Pancreas (tissue), 10 donors: ENCODE measurements at regions of chr2 and their contacts with region 1.

Region 1: GRCh38 chr2:25131567-25132298 is 36.6 kb downstream of the POMC start:
- DNase-seq: peak in 2 of 6 donors; percentile 32 to 66
- ATAC-seq: peak; percentile 27 to 38 (median 32)
- H3K4me3 ChIP-seq: peak overlapping the region in 2 of 4 donors; percentile 17 to 31
- H3K27ac ChIP-seq: no peak overlapping the region
- H3K4me1 ChIP-seq: no peaks in the 10 kb centered on the region
- H3K27me3 ChIP-seq: no peaks in the 10 kb centered on the region
- CTCF ChIP-seq: no peak

Region 2: DNA sequence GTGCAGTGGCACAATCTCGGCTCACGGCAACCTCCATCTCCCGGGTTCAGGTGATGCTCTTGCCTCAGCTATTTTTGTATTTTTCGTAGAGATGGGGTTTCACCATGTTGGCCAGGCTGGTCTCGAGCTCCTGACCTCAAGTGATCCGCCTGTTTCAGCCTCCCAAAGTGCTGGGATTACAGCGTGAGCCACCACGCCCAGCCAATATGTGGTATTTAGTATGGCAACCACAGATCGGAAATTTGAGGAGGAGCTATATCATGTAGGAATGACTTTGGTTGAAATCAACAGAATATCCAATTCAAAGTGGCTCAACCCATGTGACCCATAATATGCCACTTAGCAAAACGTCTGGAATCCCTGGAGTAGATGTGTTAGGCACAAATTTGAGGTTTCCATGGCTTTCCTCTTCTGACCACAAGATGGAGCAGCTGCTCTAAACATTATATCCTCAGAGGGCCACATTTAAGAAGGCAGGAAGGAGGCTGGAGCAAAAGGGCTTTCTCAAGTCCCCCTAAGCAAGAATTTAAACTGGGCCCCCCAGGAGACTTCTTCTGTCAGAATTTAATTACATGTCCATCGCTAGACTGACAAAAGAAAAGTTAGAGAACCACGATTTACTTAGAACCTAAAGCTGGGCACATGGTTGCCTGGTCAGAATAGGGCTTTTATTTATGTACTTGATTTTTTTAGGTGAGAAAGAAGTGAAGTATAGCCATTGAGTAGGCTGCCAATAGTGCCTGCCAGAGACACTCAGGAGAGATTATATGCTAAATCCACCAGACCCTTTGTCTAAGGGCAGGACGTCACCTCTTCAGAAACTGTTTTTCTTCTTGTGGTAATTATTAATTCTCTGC is 721.8 kb before region 1 on chr2:
- intact Hi-C with region 1: loop called in 1 of 3 experiments (anchors 10 kb)
- DNase-seq: peak in 2 of 6 donors; percentile 15 to 52
- ATAC-seq: peak; percentile 67 to 94 (median 92)
- H3K4me3 ChIP-seq: no peak overlapping the region
- H3K27ac ChIP-seq: no peak overlapping the region
- H3K4me1 ChIP-seq: no peaks in the 10 kb centered on the region
- H3K27me3 ChIP-seq: no peaks in the 10 kb centered on the region
- CTCF ChIP-seq: peak; percentile 45 to 80 (median 68)

Region 3: GRCh38 chr2:24827321-24828237 is 304.2 kb before region 1 on chr2:
- intact Hi-C with region 1: loop called in 1 of 3 experiments (anchors 10 kb)
- DNase-seq: peak in 5 of 6 donors; percentile 70 to 84 (median 77)
- ATAC-seq: peak; percentile 87 to 96 (median 94)
- H3K4me3 ChIP-seq: no peak overlapping the region
- H3K27ac ChIP-seq: no peak overlapping the region
- H3K4me1 ChIP-seq: no peaks in the 10 kb centered on the region
- H3K27me3 ChIP-seq: no peaks in the 10 kb centered on the region
- CTCF ChIP-seq: peak; percentile 74 to 86 (median 80)

Region 4: DNA sequence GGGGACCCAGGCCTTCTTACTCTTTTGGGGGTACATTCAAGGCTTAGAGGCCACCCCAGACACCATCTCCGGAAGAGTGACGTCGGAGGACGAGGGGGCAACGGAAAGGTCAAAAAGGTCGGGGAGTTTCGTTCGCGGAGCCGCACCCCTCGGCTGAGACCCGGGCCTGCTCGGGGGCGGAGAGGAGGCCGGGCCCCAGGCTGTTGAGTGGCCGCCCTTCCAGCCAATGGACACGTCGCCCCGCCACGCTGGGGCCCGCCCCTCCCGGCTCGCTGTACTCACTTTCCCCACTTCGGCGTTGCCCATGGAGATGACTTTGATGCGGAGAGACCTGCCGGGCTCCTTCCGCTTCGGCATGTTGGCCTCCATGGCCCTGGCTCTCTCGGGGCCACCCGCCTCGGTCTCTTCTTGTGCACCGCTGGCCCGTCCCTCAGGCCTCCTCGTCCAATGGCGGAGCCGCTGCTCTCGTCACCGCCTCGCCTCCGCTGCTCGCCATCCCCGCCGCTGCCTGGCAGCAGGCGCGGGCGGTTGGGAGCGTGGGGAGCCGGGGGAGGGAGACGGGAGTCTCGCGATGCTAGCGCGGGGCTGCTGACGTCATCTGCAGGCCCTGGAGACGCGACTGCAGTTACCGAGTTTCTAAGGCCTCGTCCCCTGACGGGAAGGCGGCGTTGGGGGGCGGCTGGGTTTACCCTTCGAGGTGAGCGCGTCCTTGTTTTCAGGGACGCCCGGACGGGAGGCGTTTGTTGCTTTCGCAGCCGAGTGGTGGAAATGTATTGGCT is 160.0 kb before region 1 on chr2 and contains the start of gene DNAJC27:
- intact Hi-C with region 1: loop called in 1 of 3 experiments (anchors 10 kb)
- DNase-seq: peak; percentile 97 to 99 (median 98)
- ATAC-seq: peak; percentile 93 to 96 (median 94)
- H3K4me3 ChIP-seq: peak within 1 kb of the TSS; percentile 48 to 68 (median 66)
- H3K27ac ChIP-seq: peak within 1 kb of the TSS; percentile 98 to 100 (median 98)
- H3K4me1 ChIP-seq: peaks cover 0 to 12% (median 6%) of the 10 kb centered on the region in 3 donors
- H3K27me3 ChIP-seq: no peaks in the 10 kb centered on the region
- CTCF ChIP-seq: no peak
- total RNA-seq, gene DNAJC27: 1.9 to 4.7 (median 3.2) TPM

Region 5: GRCh38 chr2:24984912-24985311 is 146.8 kb before region 1 on chr2:
- intact Hi-C with region 1: loop called in 1 of 3 experiments (anchors 5 kb)
- DNase-seq: no peak
- ATAC-seq: peak in 3 of 4 donors; percentile 66 to 87 (median 71)
- H3K4me3 ChIP-seq: no peak overlapping the region
- H3K27ac ChIP-seq: no peak overlapping the region
- H3K4me1 ChIP-seq: no peaks in the 10 kb centered on the region
- H3K27me3 ChIP-seq: no peaks in the 10 kb centered on the region
- CTCF ChIP-seq: no peak